A673 (cell line): ENCODE measurements at regions of chr10 and their contacts with region 1.

Region 1: DNA sequence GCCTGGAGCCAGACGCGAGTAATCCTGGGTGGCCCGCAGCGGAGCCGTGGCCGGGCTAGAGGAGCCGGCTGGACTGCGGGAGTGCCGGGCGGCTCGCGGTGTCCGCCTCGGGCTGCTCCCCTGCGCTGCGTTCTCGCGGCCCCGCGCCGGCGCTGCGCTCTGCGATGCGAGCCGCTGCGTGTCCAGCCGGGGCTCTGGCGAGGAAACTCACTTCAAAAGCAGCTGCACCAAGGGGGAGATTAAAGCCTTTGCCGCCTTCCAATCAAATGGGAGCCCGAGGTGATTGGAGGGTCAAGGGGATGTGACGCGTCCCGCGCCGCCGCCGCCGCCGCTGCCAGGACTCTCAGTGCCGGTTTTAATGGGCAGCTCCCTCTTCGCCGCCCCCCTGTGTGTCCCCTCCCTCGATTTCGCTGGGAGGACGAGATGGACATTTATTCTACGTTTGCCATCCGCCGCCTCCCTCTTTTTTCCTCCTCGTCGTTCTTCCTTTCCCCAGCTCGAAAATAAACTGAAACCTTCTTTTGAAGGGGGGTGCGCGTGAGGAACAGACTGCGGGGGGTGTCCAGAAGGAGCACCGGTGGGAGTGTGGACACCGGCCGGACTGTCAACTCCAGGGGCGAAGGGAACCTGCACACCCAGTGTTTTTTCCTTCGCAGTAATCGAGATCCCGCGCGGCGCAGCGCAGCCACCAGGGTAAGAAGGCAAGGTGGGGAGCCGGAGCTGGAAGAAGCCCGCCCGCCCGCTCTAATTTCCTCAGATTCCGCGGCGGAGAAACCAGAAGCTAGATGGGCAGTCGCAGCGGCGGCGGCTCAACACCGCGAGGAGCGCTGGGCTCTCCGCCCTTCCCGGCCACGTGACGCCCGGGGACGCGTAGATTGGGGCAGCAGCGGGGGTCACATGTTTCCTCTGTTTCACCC is at the start of gene ZNF503:
- DNase-seq: peak; percentile 94
- H3K4me3 ChIP-seq: peak within 1 kb of the TSS; percentile 57
- H3K27ac ChIP-seq: no peak within 1 kb of the TSS
- H3K4me1 ChIP-seq: peaks cover 32% of the 10 kb centered on the region
- H3K27me3 ChIP-seq: peaks cover 99% of the 10 kb centered on the region
- CTCF ChIP-seq: no peak
- total RNA-seq, gene ZNF503: 1.2 TPM in 2 replicates

Region 2: GRCh38 chr10:75910032-75910431 is 508.2 kb after region 1 on chr10:
- CTCF ChIA-PET with region 1: no interaction called
- POLR2A ChIA-PET with region 1: no interaction called
- intact Hi-C with region 1: loop called (anchors 10 kb)
- DNase-seq: peak; percentile 5
- H3K4me3 ChIP-seq: no peak overlapping the region
- H3K27ac ChIP-seq: no peak overlapping the region
- H3K4me1 ChIP-seq: no peaks in the 10 kb centered on the region
- H3K27me3 ChIP-seq: peaks cover 3% of the 10 kb centered on the region
- CTCF ChIP-seq: peak; percentile 51

Region 3: GRCh38 chr10:76036111-76036940 is 634.5 kb after region 1 on chr10:
- CTCF ChIA-PET with region 1: no interaction called
- POLR2A ChIA-PET with region 1: no interaction called
- intact Hi-C with region 1: loop called (anchors 1 kb)
- DNase-seq: peak; percentile 55
- H3K4me3 ChIP-seq: no peak overlapping the region
- H3K27ac ChIP-seq: no peak overlapping the region
- H3K4me1 ChIP-seq: no peaks in the 10 kb centered on the region
- H3K27me3 ChIP-seq: peaks cover 7% of the 10 kb centered on the region
- CTCF ChIP-seq: peak; percentile 88

Region 4: DNA sequence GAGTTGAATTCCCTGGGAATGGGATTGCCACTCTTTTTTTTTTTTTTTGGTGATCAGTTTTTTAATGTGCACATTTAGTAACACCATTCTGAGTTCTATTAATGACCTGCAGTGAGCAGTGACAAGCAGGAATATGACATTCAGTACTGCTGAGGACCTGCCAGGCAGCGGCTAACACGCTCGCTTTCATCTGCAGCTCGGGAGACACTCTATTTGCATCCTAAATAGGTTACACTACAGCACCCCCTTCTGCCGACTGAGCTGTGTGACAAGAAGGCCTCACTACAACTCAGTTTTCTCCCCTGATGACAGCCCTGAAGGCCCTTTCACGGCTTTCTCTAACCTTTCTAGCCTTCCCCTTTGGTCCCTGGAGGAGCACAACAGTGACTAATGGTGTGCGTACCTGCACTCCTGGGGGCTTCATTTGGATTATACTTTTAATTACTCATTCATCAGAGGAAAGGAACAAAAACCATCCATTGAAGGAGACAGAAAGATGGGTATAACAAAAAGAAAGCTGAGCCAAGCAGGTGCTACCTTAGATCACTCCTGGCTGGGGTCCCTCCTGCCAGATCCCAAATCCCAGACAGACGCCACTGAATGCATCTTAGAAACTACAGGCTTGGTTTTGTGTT is 902.0 kb after region 1 on chr10:
- CTCF ChIA-PET with region 1: interaction called, 4 read pairs
- POLR2A ChIA-PET with region 1: no interaction called
- intact Hi-C with region 1: loop called (anchors 2 kb)
- DNase-seq: peak; percentile 67
- H3K4me3 ChIP-seq: no peak overlapping the region
- H3K27ac ChIP-seq: no peak overlapping the region
- H3K4me1 ChIP-seq: peaks cover 3% of the 10 kb centered on the region
- H3K27me3 ChIP-seq: no peaks in the 10 kb centered on the region
- CTCF ChIP-seq: peak; percentile 65

Region 5: GRCh38 chr10:76547352-76547972 is 1145.6 kb after region 1 on chr10:
- CTCF ChIA-PET with region 1: no interaction called
- POLR2A ChIA-PET with region 1: no interaction called
- intact Hi-C with region 1: loop called (anchors 5 kb)
- DNase-seq: peak; percentile 83
- H3K4me3 ChIP-seq: no peak overlapping the region
- H3K27ac ChIP-seq: no peak overlapping the region
- H3K4me1 ChIP-seq: no peaks in the 10 kb centered on the region
- H3K27me3 ChIP-seq: no peaks in the 10 kb centered on the region
- CTCF ChIP-seq: peak; percentile 84